SK-N-SH (cell line): ENCODE measurements at regions of chr12 and their contacts with region 1.

Region 1: GRCh38 chr12:6927379-6928024 is at the start of gene ATN1:
- DNase-seq: peak; percentile 91
- H3K4me3 ChIP-seq: peak within 1 kb of the TSS; percentile 82 to 87
- H3K27ac ChIP-seq: peak within 1 kb of the TSS; percentile 76 to 90
- H3K4me1 ChIP-seq: peaks cover 37 to 38% of the 10 kb centered on the region in 2 experiments
- H3K27me3 ChIP-seq: no peaks in the 10 kb centered on the region
- CTCF ChIP-seq: no peak
- EP300 ChIP-seq: peak; percentile 16 to 38; a peak in 2 of 4 replicates
- RAD21 ChIP-seq: no peak
- polyA plus RNA-seq, gene ATN1: 18.5 and 29.3 TPM in 2 replicates

Region 2: GRCh38 chr12:6772331-6772695 is 155.2 kb before region 1 on chr12 and contains the start of gene LAG3:
- CTCF ChIA-PET with region 1: no interaction called
- POLR2A ChIA-PET with region 1: no interaction called
- DNase-seq: no peak
- H3K4me3 ChIP-seq: no peak within 1 kb of the TSS
- H3K27ac ChIP-seq: peak within 1 kb of the TSS in 1 of 2 experiments; percentile 56; a peak in 1 of 4 replicates
- H3K4me1 ChIP-seq: peaks cover 9 to 30% of the 10 kb centered on the region in 2 experiments; a peak in 2 of 4 replicates
- H3K27me3 ChIP-seq: no peaks in the 10 kb centered on the region
- CTCF ChIP-seq: no peak
- EP300 ChIP-seq: no peak
- RAD21 ChIP-seq: no peak
- polyA plus RNA-seq, gene LAG3: 0.72 and 1.1 TPM in 2 replicates

Region 3: GRCh38 chr12:6890789-6891645 is 36.5 kb before region 1 on chr12:
- CTCF ChIA-PET with region 1: interaction called, 19 read pairs
- POLR2A ChIA-PET with region 1: interaction called, 3 read pairs
- DNase-seq: peak; percentile 98
- H3K4me3 ChIP-seq: peak overlapping the region; percentile 44 to 63
- H3K27ac ChIP-seq: peak overlapping the region; percentile 89 to 96
- H3K4me1 ChIP-seq: peaks cover 6 to 9% of the 10 kb centered on the region in 2 experiments; a peak in 3 of 4 replicates
- H3K27me3 ChIP-seq: no peaks in the 10 kb centered on the region
- CTCF ChIP-seq: peak; percentile 79
- EP300 ChIP-seq: 0 out of 4 replicates have a peak, but pooled peaks of 1 of the 2 experiments have one; percentile 16
- RAD21 ChIP-seq: peak; percentile 58

Region 4: DNA sequence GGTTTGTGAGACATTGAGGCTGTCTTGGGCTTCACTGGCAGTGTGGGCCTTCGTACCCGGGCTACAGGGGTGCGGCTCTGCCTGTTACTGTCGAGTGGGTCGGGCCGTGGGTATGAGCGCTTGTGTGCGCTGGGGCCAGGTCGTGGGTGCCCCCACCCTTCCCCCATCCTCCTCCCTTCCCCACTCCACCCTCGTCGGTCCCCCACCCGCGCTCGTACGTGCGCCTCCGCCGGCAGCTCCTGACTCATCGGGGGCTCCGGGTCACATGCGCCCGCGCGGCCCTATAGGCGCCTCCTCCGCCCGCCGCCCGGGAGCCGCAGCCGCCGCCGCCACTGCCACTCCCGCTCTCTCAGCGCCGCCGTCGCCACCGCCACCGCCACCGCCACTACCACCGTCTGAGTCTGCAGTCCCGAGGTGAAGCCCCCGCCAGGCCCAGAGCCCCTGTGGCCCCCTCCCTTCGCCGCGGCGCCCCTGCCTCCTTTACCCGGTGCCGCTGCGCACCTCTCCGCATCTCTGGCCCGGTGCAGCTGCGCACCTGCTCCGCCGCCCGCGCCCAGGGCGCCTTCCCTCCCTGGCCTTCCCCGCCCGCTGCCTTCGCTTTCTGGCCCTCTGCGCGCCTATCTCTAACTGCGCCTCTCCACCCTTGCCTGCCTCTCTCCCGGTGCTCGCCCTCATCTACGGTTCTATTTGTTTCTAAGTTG is 13.1 kb before region 1 on chr12 and contains the start of gene ENO2:
- CTCF ChIA-PET with region 1: interaction called, 62 read pairs
- POLR2A ChIA-PET with region 1: interaction called, 21 read pairs
- DNase-seq: peak; percentile 91
- H3K4me3 ChIP-seq: peak within 1 kb of the TSS; percentile 69 to 92
- H3K27ac ChIP-seq: peak within 1 kb of the TSS; percentile 49 to 82
- H3K4me1 ChIP-seq: peaks cover 14 to 18% of the 10 kb centered on the region in 2 experiments; a peak in 2 of 4 replicates
- H3K27me3 ChIP-seq: no peaks in the 10 kb centered on the region
- CTCF ChIP-seq: no peak
- EP300 ChIP-seq: no peak; a peak in 1 of 4 replicates
- RAD21 ChIP-seq: no peak
- polyA plus RNA-seq, gene ENO2: 50.6 and 56.9 TPM in 2 replicates

Region 5: GRCh38 chr12:6937481-6938297 is 10.2 kb after region 1 on chr12:
- CTCF ChIA-PET with region 1: interaction called, 134 read pairs
- POLR2A ChIA-PET with region 1: interaction called, 82 read pairs
- DNase-seq: peak; percentile 92
- H3K4me3 ChIP-seq: peak overlapping the region; percentile 53 to 66; a peak in 3 of 4 replicates
- H3K27ac ChIP-seq: peak overlapping the region; percentile 60 to 90
- H3K4me1 ChIP-seq: peaks cover 0 to 18% of the 10 kb centered on the region in 2 experiments; a peak in 2 of 4 replicates
- H3K27me3 ChIP-seq: no peaks in the 10 kb centered on the region
- CTCF ChIP-seq: peak; percentile 88
- EP300 ChIP-seq: 0 out of 4 replicates have a peak, but pooled peaks of 1 of the 2 experiments have one; percentile 23
- RAD21 ChIP-seq: peak; percentile 53

Region 6: GRCh38 chr12:6950811-6951540 is 23.5 kb after region 1 on chr12 and contains the start of gene PTPN6:
- CTCF ChIA-PET with region 1: interaction called, 70 read pairs
- POLR2A ChIA-PET with region 1: interaction called, 82 read pairs
- DNase-seq: peak; percentile 11
- H3K4me3 ChIP-seq: no peak within 1 kb of the TSS
- H3K27ac ChIP-seq: no peak within 1 kb of the TSS
- H3K4me1 ChIP-seq: no peaks in the 10 kb centered on the region
- H3K27me3 ChIP-seq: no peaks in the 10 kb centered on the region
- CTCF ChIP-seq: no peak
- EP300 ChIP-seq: no peak
- RAD21 ChIP-seq: no peak
- polyA plus RNA-seq, gene PTPN6: 0.12 and 0.18 TPM in 2 replicates

Region 7: DNA sequence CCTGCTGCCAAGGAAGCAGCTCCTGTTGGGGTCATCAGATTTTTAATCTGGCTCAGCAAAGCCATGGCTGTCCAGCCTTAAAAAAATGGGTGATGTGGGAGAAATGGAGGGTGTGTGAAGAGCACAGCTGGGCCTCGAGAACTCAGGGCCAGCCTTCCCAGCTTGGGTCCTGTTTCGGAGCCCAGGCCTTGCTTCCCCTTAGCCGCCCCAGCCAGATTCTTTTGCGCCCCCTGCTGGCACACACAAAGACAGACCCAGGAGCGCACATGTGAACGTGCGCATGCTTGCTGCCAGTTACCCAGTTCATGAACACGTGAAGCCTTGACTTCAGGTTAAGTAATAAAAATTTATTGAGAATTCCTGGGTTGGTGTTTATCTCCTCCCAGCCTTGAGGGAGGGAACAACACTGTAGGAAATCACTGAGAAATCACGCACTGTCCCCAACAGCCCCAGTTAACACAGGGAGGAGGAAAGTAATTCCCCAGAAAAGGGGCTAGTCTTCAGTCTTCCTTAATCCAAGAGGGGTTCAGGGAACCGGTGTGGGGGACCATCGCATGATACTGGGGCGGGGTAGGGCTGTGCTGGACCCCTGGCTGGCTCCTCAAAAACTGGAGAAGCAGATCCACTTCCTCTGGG is 37.6 kb after region 1 on chr12:
- CTCF ChIA-PET with region 1: interaction called, 62 read pairs
- POLR2A ChIA-PET with region 1: interaction called, 6 read pairs
- DNase-seq: peak; percentile 89
- H3K4me3 ChIP-seq: peak overlapping the region in 1 of 2 experiments; percentile 33; a peak in 1 of 4 replicates
- H3K27ac ChIP-seq: peak overlapping the region; percentile 42 to 47; a peak in 3 of 4 replicates
- H3K4me1 ChIP-seq: peaks cover 6 to 22% of the 10 kb centered on the region in 2 experiments; a peak in 3 of 4 replicates
- H3K27me3 ChIP-seq: no peaks in the 10 kb centered on the region
- CTCF ChIP-seq: peak; percentile 90
- EP300 ChIP-seq: no peak
- RAD21 ChIP-seq: peak; percentile 70